Left lung (tissue), 14 donors: ENCODE measurements at regions of chr18 and their contacts with region 1.

Region 1: GRCh38 chr18:2547477-2548087 is 23.7 kb downstream of the METTL4 start:
- DNase-seq: peak in 1 of 4 donors; percentile 53
- ATAC-seq: peak; percentile 79
- H3K4me3 ChIP-seq: no peak overlapping the region
- H3K27ac ChIP-seq: no peak overlapping the region
- H3K4me1 ChIP-seq: no peaks in the 10 kb centered on the region
- H3K27me3 ChIP-seq: no peaks in the 10 kb centered on the region
- CTCF ChIP-seq: peak; percentile 23 to 63

Region 2: GRCh38 chr18:2104620-2105462 is 442.7 kb before region 1 on chr18:
- intact Hi-C with region 1: loop called in 1 of 2 experiments (anchors 10 kb)
- DNase-seq: peak; percentile 18 to 87 (median 38)
- ATAC-seq: peak; percentile 93
- H3K4me3 ChIP-seq: no peak overlapping the region
- H3K27ac ChIP-seq: no peak overlapping the region
- H3K4me1 ChIP-seq: no peaks in the 10 kb centered on the region
- H3K27me3 ChIP-seq: no peaks in the 10 kb centered on the region
- CTCF ChIP-seq: peak; percentile 66 to 68